GM18951 (cell line): ENCODE measurements at regions of chr7 and their contacts with region 1.

Region 1: DNA sequence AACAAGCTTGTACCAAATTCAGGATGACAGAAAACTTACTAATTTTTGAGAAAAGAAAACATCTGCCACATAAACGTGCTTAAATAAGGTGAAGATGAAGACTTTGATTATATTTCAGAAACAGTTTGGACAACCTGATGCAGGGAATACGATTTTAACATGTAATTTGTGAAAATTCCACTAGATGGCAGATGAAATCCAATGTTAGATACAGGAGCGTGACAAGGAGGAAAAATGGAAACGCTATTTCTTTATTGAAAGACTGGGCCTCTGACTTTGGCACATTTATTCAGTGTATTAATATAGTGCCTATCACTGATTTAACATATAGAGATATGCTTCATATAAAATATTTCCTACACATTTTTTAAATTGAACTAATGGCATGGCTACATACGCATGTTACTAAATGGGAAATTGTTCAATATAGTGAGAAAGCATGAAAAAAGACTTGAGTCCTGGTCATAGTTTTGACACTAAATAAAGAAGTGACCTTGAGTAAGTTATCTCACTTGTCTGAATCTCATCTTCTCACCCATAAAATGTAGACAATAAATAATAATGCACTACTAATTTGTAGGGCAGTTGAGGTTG is 60.7 kb downstream of the CD36 start:
- POLR2A ChIP-seq: no peak

Region 2: DNA sequence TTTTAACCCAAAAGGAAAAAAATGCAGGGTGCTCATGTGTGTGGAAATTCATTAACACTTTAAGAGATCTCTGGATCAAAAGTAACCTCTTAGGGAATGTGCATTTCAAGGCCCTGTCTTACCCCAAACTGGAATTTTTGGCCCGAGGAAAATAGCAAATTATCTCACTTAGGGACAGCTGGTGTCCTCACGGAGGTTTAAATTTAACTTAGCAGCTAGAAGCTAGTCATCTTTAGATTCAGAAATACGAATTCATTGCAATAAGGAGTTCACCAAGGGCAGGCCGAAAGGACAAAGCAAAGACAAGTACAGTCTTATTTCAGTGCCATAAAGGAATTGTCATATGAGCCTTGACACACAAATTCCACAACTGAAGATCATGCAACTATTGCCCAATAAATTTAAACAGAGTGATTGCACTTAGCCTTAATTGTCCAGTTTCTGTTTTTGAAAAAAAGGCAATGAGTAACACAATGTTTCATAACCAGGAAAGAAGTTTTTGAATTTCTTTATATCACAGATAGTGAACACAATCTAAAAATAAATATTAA is 242.1 kb after region 1 on chr7:
- in situ Hi-C with region 1: no loop called
- POLR2A ChIP-seq: no peak

Region 3: GRCh38 chr7:81469869-81470723 is 771.0 kb after region 1 on chr7:
- in situ Hi-C with region 1: loop called (anchors 25 kb)
- POLR2A ChIP-seq: no peak